ENCODE measurements at regions of chr2 and their contacts with region 1.

Region 1: GRCh38 chr2:150167711-150168110 is 319.8 kb downstream of the RND3 start:
- DNase-seq: peak; percentile 95
- ATAC-seq: peak; percentile 71
- H3K4me3 ChIP-seq: no peak overlapping the region; the same call in 1 of the 2 replicates
- H3K27ac ChIP-seq: peak overlapping the region; percentile 96
- H3K4me1 ChIP-seq: peaks cover 52% of the 10 kb centered on the region
- H3K27me3 ChIP-seq: no peaks in the 10 kb centered on the region
- CTCF ChIP-seq: no peak

Region 2: DNA sequence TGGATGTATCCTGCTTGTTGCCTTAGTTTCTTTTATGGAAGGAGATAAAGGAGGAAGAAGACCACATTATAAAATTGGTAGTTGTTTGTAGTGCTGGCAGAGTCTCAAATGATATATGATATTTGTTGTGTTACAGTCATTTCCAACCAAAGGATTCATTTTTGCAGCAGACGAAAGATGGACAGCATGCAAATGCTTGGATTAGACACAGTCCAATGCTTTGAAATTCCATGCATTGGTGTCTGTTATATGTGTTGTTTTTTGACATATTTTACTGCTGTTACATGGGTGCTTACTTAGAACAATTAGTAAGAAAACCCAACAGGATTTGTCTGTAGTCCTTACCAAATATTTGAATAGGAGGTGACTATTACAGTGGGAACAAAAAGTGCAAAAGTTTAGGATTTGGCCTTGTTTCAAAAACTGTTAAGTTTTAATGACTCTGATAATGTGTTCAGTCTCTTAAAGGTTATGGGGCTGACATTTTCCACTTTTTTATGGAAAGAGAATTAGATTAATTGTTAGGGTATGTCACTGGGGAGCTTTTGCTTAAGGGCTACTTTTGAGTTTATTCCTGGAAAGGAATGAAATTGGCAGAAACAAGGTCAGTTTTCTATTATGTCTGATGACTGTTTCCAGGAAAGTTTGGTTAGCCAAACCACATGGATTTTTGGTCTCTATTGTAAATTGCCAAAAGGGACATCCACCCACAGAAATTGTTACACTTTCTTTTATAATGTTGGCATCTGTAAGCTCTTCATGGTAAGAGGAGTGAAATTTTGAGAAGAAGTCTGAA is 350.8 kb before region 1 on chr2:
- CTCF ChIA-PET with region 1: no interaction called
- POLR2A ChIA-PET with region 1: no interaction called
- intact Hi-C with region 1: loop called (anchors 5 kb)
- DNase-seq: peak; percentile 7
- ATAC-seq: peak; percentile 70
- H3K4me3 ChIP-seq: no peak overlapping the region
- H3K27ac ChIP-seq: no peak overlapping the region
- H3K4me1 ChIP-seq: peaks cover 11% of the 10 kb centered on the region
- H3K27me3 ChIP-seq: no peaks in the 10 kb centered on the region
- CTCF ChIP-seq: no peak

Region 3: GRCh38 chr2:149994057-149994753 is 173.5 kb before region 1 on chr2:
- CTCF ChIA-PET with region 1: no interaction called
- POLR2A ChIA-PET with region 1: no interaction called
- intact Hi-C with region 1: loop called (anchors 1 kb)
- DNase-seq: peak; percentile 98
- ATAC-seq: peak; percentile 59
- H3K4me3 ChIP-seq: no peak overlapping the region
- H3K27ac ChIP-seq: peak overlapping the region; percentile 45
- H3K4me1 ChIP-seq: peaks cover 56% of the 10 kb centered on the region
- H3K27me3 ChIP-seq: no peaks in the 10 kb centered on the region
- CTCF ChIP-seq: no peak

Region 4: DNA sequence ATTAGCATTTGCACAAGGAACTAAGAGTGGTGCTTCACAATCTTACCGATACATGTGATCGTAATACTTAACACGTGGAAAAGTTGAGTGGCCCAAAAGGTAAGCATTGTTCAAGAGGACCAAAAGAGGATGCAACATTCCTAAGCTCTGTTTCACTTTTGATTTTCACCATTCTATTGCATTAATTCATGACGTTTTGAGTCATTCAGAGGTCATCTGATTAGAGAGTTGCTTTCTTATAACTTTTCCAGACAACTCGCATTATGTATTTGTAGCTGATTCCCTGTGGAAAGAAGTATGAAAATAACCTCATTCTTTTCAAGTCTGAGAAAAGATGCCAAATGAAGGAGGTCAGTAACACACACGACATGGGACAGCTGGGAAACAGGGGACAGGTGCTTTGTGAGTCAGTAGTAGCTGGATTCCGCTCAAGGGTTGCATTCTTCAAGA is 24.6 kb before region 1 on chr2:
- CTCF ChIA-PET with region 1: interaction called, 4 read pairs
- POLR2A ChIA-PET with region 1: no interaction called
- intact Hi-C with region 1: loop called (anchors 1 kb)
- DNase-seq: peak; percentile 94
- ATAC-seq: peak; percentile 29
- H3K4me3 ChIP-seq: peak overlapping the region; percentile 21; the same call in 1 of the 2 replicates
- H3K27ac ChIP-seq: peak overlapping the region; percentile 98
- H3K4me1 ChIP-seq: peaks cover 62% of the 10 kb centered on the region
- H3K27me3 ChIP-seq: no peaks in the 10 kb centered on the region
- CTCF ChIP-seq: no peak

Measured in PC-3 (cell line).